Calu3 (cell line): ENCODE measurements at regions of chr10 and their contacts with region 1.

Region 1: DNA sequence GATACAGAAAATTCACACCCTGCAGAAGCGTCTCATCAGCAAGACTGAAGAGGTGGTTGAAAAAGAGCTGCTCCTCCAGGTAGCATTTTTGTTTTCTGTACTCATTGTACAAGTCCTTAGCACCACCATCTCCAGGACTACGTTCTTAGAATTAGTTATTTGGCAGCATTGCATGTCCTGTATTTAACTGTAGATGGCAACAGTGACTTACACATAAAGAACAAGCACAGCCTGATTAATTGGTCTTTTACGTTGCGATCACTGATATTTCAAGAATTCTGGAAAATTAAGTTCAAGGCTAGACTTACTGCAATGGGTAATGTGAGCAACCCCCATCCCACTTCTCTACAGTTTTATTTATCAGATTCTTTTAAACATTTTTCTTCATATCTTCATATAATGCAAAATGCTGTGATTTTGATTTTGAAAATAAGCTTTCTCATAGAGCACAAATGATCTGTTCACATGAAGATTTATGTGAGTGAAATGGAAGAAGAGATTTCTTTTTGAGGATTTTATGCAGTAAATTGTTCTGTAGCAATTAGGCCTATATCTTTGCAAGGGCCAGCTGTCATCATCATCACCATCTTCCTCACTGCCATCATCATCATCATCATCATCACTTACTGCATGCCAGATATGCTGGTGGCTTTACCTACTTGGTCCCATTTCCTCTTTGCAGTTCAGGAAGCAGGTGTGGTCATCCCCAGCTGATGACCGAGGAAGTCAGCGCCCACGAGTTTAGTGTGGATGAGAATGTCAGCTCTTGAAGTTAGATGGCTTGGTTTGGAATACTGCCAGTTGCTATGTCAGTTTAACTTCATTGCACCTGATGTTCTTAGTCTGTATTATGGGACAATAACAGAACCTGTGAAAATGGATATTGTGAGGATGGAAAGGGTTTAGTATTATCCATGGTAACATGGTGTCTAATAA is 53.4 kb downstream of the CFAP58 start:
- DNase-seq: no peak
- H3K4me3 Mint-ChIP-seq: no peak overlapping the region
- H3K27ac Mint-ChIP-seq: no peak overlapping the region
- H3K4me1 Mint-ChIP-seq: no peaks in the 10 kb centered on the region
- H3K27me3 Mint-ChIP-seq: peaks cover 50% of the 10 kb centered on the region
- CTCF ChIP-seq: no peak

Region 2: GRCh38 chr10:104614245-104614831 is 207.4 kb after region 1 on chr10:
- CTCF ChIA-PET with region 1: no interaction called
- intact Hi-C with region 1: loop called (anchors 2 kb)
- DNase-seq: peak; percentile 28
- H3K4me3 Mint-ChIP-seq: no peak overlapping the region
- H3K27ac Mint-ChIP-seq: no peak overlapping the region
- H3K4me1 Mint-ChIP-seq: no peaks in the 10 kb centered on the region
- H3K27me3 Mint-ChIP-seq: peaks cover 35% of the 10 kb centered on the region
- CTCF ChIP-seq: peak; percentile 27